Naive thymus-derived CD4-positive, alpha-beta T cell (primary cell): ENCODE measurements at regions of chr19 and their contacts with region 1.

Region 1: DNA sequence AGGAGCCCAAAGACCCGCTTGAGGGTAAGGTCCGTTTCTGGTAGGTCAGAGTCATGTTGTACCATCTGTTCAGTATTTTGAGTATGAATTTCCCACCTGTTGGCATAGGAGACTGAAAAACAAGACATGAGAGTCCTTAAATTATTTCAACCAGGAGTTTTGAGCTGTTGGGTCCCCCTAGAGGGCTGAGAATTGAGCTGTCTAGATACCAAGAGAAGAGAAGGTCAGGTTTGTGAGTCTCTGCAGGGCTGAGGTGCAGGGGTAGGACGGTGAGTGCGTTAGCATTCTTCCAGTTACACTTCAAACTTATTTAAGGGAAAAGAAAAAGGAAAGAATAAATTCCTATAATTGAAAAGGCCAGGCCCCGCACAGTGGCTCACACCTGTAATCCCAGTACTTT is 5.0 kb downstream of the CBLC start:
- DNase-seq: no peak
- ATAC-seq: no peak
- H3K4me3 ChIP-seq: no peak overlapping the region
- H3K4me3 Mint-ChIP-seq: no peak overlapping the region
- H3K27ac ChIP-seq: no peak overlapping the region
- H3K27ac Mint-ChIP-seq: no peak overlapping the region
- H3K4me1 ChIP-seq: no peaks in the 10 kb centered on the region
- H3K4me1 Mint-ChIP-seq: peaks cover 0 to 7% (median 6%) of the 10 kb centered on the region in 7 donors
- H3K27me3 ChIP-seq: no peaks in the 10 kb centered on the region
- H3K27me3 Mint-ChIP-seq: peaks cover 0 to 4% (median 0%) of the 10 kb centered on the region in 5 donors

Region 2: GRCh38 chr19:44557933-44558332 is 224.8 kb before region 1 on chr19:
- CTCF ChIA-PET with region 1: no interaction called
- POLR2A ChIA-PET with region 1: no interaction called
- intact Hi-C with region 1: no loop called
- DNase-seq: no peak
- ATAC-seq: no peak
- H3K4me3 ChIP-seq: no peak overlapping the region
- H3K4me3 Mint-ChIP-seq: no peak overlapping the region
- H3K27ac ChIP-seq: no peak overlapping the region
- H3K27ac Mint-ChIP-seq: no peak overlapping the region
- H3K4me1 ChIP-seq: no peaks in the 10 kb centered on the region
- H3K4me1 Mint-ChIP-seq: no peaks in the 10 kb centered on the region
- H3K27me3 ChIP-seq: no peaks in the 10 kb centered on the region
- H3K27me3 Mint-ChIP-seq: peaks cover 0 to 37% (median 20%) of the 10 kb centered on the region in 5 donors

Region 3: GRCh38 chr19:45331423-45331822 is 548.7 kb after region 1 on chr19:
- CTCF ChIA-PET with region 1: no interaction called
- POLR2A ChIA-PET with region 1: no interaction called
- intact Hi-C with region 1: loop called in 1 of 2 experiments (anchors 10 kb)
- DNase-seq: no peak
- ATAC-seq: no peak
- H3K4me3 ChIP-seq: no peak overlapping the region
- H3K4me3 Mint-ChIP-seq: no peak overlapping the region
- H3K27ac ChIP-seq: no peak overlapping the region
- H3K27ac Mint-ChIP-seq: peak overlapping the region in 1 of 9 donors; percentile 75
- H3K4me1 ChIP-seq: no peaks in the 10 kb centered on the region
- H3K4me1 Mint-ChIP-seq: peaks cover 0 to 1% (median 0%) of the 10 kb centered on the region in 7 donors
- H3K27me3 ChIP-seq: no peaks in the 10 kb centered on the region
- H3K27me3 Mint-ChIP-seq: peaks cover 1 to 10% (median 4%) of the 10 kb centered on the region in 5 donors